Stomach (tissue), 19 donors: ENCODE measurements at regions of chr9 and their contacts with region 1.

Region 1: DNA sequence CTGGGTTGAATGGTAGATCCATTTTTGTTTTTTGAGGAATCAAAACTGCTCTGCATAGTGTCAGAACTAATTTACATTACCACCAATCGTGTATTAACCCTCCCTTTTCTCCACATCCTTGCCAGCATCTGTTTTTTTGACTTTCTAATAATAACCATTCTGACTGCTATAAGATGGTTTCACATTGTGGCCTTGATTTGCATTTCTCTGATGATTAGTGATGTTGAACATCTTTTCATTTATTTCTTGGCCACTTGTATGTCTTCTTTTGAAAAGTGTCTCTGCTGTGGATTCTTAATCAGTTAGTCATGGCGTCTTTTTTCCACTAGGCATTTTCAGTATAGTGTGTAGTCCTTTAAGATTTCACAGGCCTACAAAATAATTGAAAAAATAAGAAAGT is 2144.3 kb upstream of the C9orf72 start:
- DNase-seq: no peak
- H3K4me3 ChIP-seq: no peak overlapping the region
- H3K27ac ChIP-seq: no peak overlapping the region
- H3K4me1 ChIP-seq: no peaks in the 10 kb centered on the region
- H3K27me3 ChIP-seq: no peaks in the 10 kb centered on the region
- CTCF ChIP-seq: no peak
- EP300 ChIP-seq: no peak
- POLR2A ChIP-seq: no peak

Region 2: DNA sequence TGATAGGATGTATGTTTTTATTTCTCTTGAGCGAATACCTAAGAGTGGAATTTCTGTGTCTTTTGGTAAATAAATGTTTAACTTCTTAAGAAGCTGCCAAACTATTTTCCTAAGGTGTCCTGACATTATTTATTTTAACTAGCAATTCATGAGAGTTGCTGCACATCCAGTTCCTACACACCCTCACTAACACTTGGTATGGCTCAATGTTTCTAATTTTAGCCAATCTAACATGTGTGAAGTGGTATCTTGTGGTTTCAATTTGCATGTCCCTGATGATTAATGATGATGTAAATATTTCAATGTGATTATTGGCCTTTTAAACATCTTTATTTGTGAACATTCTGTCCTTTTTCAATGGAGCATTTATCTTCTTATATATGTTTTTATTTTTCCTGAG is 48.9 kb before region 1 on chr9:
- intact Hi-C with region 1: loop called (anchors 10 kb)
- DNase-seq: no peak
- H3K4me3 ChIP-seq: no peak overlapping the region
- H3K27ac ChIP-seq: no peak overlapping the region
- H3K4me1 ChIP-seq: no peaks in the 10 kb centered on the region
- H3K27me3 ChIP-seq: no peaks in the 10 kb centered on the region
- CTCF ChIP-seq: no peak
- EP300 ChIP-seq: no peak
- POLR2A ChIP-seq: no peak